PC-3 (cell line): ENCODE measurements at regions of chr15 and their contacts with region 1.

Region 1: GRCh38 chr15:73956739-73957051 is 30.4 kb downstream of the LOXL1 start:
- DNase-seq: peak; percentile 98
- ATAC-seq: peak; percentile 72
- H3K4me3 ChIP-seq: peak overlapping the region; percentile 32; the same call in 1 of the 2 replicates
- H3K27ac ChIP-seq: peak overlapping the region; percentile 97
- H3K4me1 ChIP-seq: peaks cover 62% of the 10 kb centered on the region
- H3K27me3 ChIP-seq: no peaks in the 10 kb centered on the region
- CTCF ChIP-seq: no peak

Region 2: GRCh38 chr15:73897441-73898261 is 59.0 kb before region 1 on chr15:
- CTCF ChIA-PET with region 1: no interaction called
- POLR2A ChIA-PET with region 1: no interaction called
- intact Hi-C with region 1: loop called (anchors 5 kb)
- DNase-seq: peak; percentile 90
- ATAC-seq: peak; percentile 81
- H3K4me3 ChIP-seq: no peak overlapping the region
- H3K27ac ChIP-seq: peak overlapping the region; percentile 92
- H3K4me1 ChIP-seq: peaks cover 37% of the 10 kb centered on the region
- H3K27me3 ChIP-seq: no peaks in the 10 kb centered on the region
- CTCF ChIP-seq: peak; percentile 98

Region 3: DNA sequence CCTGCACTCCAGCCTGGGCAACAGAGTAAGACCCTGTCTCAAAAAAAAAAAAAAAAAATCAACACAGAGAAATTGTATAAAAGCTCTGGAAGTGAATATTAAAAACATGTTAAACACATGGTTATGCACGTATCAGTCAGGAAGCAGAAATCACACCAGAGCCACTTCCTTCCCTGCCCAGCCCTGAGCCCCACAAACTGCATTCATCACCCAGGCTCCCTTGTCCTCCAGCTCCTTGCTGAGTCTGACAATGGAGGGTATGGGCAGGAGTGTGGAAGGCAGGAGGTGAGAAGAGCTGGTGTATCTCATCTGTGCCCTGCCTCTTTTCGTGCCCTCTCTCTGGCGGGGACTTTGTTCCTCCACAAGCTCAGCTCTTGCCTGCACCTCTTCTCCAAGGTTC is 42.5 kb before region 1 on chr15:
- CTCF ChIA-PET with region 1: no interaction called
- POLR2A ChIA-PET with region 1: no interaction called
- intact Hi-C with region 1: loop called (anchors 2 kb)
- DNase-seq: no peak
- ATAC-seq: no peak
- H3K4me3 ChIP-seq: no peak overlapping the region
- H3K27ac ChIP-seq: peak overlapping the region; percentile 54
- H3K4me1 ChIP-seq: peaks cover 51% of the 10 kb centered on the region
- H3K27me3 ChIP-seq: no peaks in the 10 kb centered on the region
- CTCF ChIP-seq: no peak

Region 4: DNA sequence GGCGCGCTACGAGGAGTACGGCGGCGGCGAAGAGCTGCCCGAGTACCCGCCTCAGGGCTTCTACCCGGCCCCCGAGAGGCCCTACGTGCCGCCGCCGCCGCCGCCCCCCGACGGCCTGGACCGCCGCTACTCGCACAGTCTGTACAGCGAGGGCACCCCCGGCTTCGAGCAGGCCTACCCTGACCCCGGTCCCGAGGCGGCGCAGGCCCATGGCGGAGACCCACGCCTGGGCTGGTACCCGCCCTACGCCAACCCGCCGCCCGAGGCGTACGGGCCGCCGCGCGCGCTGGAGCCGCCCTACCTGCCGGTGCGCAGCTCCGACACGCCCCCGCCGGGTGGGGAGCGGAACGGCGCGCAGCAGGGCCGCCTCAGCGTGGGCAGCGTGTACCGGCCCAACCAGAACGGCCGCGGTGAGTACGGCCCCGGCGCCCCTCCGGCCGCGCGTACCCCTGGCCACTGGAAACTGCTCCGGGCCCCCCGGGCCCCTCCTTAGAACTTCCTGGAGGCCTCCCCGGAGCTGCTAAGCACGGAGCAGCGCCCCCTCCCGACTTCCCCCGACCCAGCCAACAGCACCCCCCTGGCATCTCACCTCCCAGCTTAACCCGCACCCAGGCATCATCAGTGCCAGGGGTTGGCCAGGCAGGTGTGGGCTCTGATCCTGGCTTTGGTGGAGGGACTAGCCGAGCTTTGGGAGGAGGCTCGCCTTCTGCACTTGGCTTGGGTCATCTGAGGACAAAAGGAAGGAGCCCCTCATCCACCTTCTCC is 29.0 kb before region 1 on chr15:
- CTCF ChIA-PET with region 1: interaction called, 3 read pairs
- POLR2A ChIA-PET with region 1: interaction called, 8 read pairs
- intact Hi-C with region 1: loop called (anchors 2 kb)
- DNase-seq: peak; percentile 78
- ATAC-seq: peak; percentile 35
- H3K4me3 ChIP-seq: peak overlapping the region; percentile 90
- H3K27ac ChIP-seq: peak overlapping the region; percentile 83
- H3K4me1 ChIP-seq: peaks cover 84% of the 10 kb centered on the region
- H3K27me3 ChIP-seq: no peaks in the 10 kb centered on the region
- CTCF ChIP-seq: peak; percentile 66

Region 5: DNA sequence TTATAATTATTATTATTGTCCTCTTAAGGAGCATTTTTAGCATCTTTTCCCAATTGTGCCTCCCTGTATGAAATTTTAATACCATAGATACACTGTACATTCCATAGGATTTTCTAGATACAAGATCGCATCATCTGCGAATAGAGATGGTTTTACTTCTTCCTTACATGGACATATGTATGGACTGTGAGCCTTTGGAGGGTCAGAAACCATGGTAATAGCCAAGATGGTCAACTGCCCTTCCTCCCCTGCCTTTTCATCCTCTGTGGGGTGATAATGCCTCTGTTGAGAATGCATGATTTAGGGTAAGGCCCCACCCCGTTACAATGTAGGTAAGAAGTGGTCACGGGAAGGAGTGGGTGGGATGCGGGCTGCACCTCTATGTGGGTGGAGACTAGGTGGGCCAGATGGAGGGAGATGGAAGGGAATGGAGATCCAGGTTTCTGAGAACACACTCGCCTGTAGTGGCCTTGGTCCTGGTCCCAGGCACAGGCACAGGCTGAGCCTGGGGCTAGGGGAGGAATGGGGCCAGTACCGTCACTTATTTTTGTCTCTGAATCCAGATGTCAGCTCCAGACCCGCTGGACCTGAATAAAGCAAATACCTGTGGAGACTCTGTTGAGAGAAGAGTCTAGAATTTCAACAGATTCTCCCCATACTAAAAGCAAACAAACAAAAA is 94.0 kb after region 1 on chr15:
- CTCF ChIA-PET with region 1: interaction called, 4 read pairs
- POLR2A ChIA-PET with region 1: interaction called, 11 read pairs
- intact Hi-C with region 1: no loop called
- DNase-seq: no peak
- ATAC-seq: no peak
- H3K4me3 ChIP-seq: no peak overlapping the region
- H3K27ac ChIP-seq: no peak overlapping the region
- H3K4me1 ChIP-seq: peaks cover 9% of the 10 kb centered on the region
- H3K27me3 ChIP-seq: no peaks in the 10 kb centered on the region
- CTCF ChIP-seq: no peak